Activated T-helper 1 cell treated with anti-CD3 and anti-CD28 coated beads, Interleukin-12 subunit alpha, Interleukin-12 subunit beta, Interleukin-2, Interleukin-4 antibody, amounts not matched to agents 30 ng/mL and 10 ng/mL and 1 ng/mL, durations not matched to agents 14 hours and 24 hours and 36 hours (primary cell): ENCODE measurements at regions of chr20 and their contacts with region 1.

Region 1: DNA sequence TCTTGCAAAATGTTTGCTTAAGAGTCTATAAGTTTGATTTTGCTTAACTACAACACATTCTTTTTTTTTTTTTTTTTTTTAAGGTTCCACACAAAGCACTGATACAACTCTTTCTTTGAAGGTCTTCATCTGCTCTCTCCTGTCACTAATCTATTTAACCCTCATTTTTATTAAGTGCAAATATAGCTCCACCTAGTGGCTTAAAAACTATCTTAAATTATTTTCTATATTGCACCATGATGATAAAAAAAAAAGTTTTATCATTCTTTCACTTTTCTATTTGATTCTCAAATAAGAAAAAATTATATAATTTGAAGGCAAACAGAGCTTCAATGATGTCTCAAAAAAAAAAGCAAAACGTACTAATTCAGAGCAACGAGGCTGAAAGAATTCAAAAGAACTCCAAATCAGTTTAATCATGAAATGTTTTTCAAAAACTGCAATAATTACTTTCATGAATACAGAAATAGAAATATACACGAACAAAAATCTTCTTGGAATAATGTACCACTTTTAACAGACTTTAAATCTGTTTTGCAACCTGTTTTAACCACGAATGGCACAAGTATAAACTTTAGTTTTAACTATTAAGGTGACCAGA is 12.8 kb downstream of the ESF1 start:
- DNase-seq: no peak
- H3K4me3 Mint-ChIP-seq: no peak overlapping the region
- H3K27ac Mint-ChIP-seq: no peak overlapping the region
- H3K4me1 Mint-ChIP-seq: peaks cover 11% of the 10 kb centered on the region
- H3K27me3 Mint-ChIP-seq: no peaks in the 10 kb centered on the region

Region 2: GRCh38 chr20:12970372-12970821 is 801.6 kb before region 1 on chr20:
- intact Hi-C with region 1: loop called (anchors 2 kb)
- DNase-seq: no peak
- H3K4me3 Mint-ChIP-seq: no peak overlapping the region
- H3K27ac Mint-ChIP-seq: no peak overlapping the region
- H3K4me1 Mint-ChIP-seq: no peaks in the 10 kb centered on the region
- H3K27me3 Mint-ChIP-seq: no peaks in the 10 kb centered on the region